B cell (primary cell): ENCODE measurements at regions of chr1 and their contacts with region 1.

Region 1: DNA sequence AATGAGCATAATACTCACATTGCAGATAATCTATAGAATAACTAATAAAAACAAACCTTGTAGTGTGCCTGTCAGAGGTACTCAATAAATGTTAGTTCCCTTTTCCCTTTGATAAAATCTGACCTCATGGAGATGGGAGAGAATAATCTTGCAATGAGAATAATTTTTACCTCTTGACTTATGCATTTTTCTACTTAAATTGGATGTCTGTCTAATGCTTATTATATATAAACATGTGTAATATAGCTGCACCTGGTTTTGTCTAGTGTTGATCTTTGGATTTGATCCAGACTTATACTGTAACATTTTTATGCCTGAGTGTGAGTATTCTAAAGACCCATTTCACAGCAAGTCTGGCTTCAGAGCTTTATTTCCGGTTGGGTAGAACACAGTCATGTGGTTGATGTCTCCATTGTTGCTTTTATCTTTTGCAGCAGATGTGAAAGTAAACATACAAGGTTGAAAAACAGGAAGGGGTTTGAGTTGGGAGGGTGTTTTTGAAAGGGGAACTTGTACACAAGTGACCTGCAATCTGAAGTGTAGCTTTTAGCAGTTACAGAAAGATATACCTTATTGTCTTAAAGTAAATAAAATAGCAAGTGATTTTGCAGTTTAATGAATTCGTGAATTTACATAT is 12.4 kb downstream of the EPB41 start:
- DNase-seq: peak; percentile 87
- ATAC-seq: peak; percentile 84
- H3K4me3 ChIP-seq: peak overlapping the region in 4 of 5 experiments; percentile 19 to 60 (median 48)
- H3K4me3 Mint-ChIP-seq: peak overlapping the region; percentile 75
- H3K27ac ChIP-seq: peak overlapping the region; percentile 83 to 94
- H3K27ac Mint-ChIP-seq: peak overlapping the region; percentile 83
- H3K4me1 ChIP-seq: peaks cover 62 to 70% of the 10 kb centered on the region in 2 donors
- H3K4me1 Mint-ChIP-seq: peaks cover 60% of the 10 kb centered on the region
- H3K27me3 ChIP-seq: no peaks in the 10 kb centered on the region
- H3K27me3 Mint-ChIP-seq: no peaks in the 10 kb centered on the region
- CTCF ChIP-seq: no peak

Region 2: DNA sequence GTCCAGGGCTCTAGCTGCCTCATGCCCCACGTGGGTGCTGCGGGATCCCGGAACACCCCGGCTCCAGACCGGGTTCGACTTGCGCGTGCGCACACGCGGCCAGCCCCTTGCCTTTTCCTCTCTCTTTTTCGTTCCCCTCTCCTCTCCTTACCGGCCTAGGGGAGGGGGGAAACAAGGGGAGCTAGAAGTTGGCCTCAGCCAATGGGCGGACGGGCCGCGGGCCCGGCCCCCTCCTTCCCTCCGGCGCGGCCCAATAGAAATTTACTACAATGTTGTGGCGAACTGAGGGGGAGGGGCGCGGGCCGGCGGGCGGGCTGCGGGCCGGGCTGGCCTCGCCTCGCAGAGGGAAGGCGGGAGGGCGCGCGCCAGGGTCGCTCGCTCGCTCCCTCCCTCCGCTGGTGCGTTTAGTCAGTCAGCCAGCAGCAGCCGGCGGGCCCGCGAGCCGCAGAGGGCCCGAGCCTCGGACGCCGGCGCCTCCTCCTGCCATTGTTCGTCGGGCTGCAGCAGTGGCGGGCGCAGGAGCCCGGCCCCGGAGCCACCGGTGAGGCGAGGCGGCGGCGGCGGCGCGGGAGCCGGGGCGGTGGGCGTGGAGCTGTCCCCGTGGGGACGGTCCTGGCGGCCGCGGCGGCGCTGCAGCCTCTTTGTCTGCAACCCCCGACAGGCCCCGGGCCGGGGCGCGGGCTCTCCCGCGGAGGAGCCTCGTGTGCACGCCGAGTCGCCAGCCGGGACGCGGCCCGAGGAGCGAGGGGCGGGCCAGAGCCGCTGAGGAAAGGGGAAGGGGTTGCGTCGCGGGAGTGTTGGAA is 12.3 kb before region 1 on chr1 and contains the start of gene EPB41:
- CTCF ChIA-PET with region 1: interaction called, 8 read pairs
- POLR2A ChIA-PET with region 1: interaction called, 14 read pairs
- intact Hi-C with region 1: loop called (anchors 1 kb)
- DNase-seq: peak; percentile 93
- ATAC-seq: peak; percentile 92
- H3K4me3 ChIP-seq: peak within 1 kb of the TSS; percentile 58 to 87 (median 80)
- H3K4me3 Mint-ChIP-seq: peak within 1 kb of the TSS; percentile 99
- H3K27ac ChIP-seq: peak within 1 kb of the TSS; percentile 37 to 74
- H3K27ac Mint-ChIP-seq: peak within 1 kb of the TSS; percentile 94
- H3K4me1 ChIP-seq: peaks cover 19 to 27% of the 10 kb centered on the region in 2 donors
- H3K4me1 Mint-ChIP-seq: peaks cover 45% of the 10 kb centered on the region
- H3K27me3 ChIP-seq: no peaks in the 10 kb centered on the region
- H3K27me3 Mint-ChIP-seq: no peaks in the 10 kb centered on the region
- CTCF ChIP-seq: no peak
- total RNA-seq, gene EPB41: 186 and 203 TPM in 2 replicates

Region 3: GRCh38 chr1:28956038-28956464 is 29.3 kb after region 1 on chr1:
- CTCF ChIA-PET with region 1: no interaction called
- POLR2A ChIA-PET with region 1: no interaction called
- intact Hi-C with region 1: loop called (anchors 5 kb)
- DNase-seq: no peak
- ATAC-seq: no peak
- H3K4me3 ChIP-seq: no peak overlapping the region
- H3K4me3 Mint-ChIP-seq: no peak overlapping the region
- H3K27ac ChIP-seq: no peak overlapping the region
- H3K27ac Mint-ChIP-seq: no peak overlapping the region
- H3K4me1 ChIP-seq: no peaks in the 10 kb centered on the region
- H3K4me1 Mint-ChIP-seq: peaks cover 29% of the 10 kb centered on the region
- H3K27me3 ChIP-seq: no peaks in the 10 kb centered on the region
- H3K27me3 Mint-ChIP-seq: no peaks in the 10 kb centered on the region
- CTCF ChIP-seq: no peak

Region 4: DNA sequence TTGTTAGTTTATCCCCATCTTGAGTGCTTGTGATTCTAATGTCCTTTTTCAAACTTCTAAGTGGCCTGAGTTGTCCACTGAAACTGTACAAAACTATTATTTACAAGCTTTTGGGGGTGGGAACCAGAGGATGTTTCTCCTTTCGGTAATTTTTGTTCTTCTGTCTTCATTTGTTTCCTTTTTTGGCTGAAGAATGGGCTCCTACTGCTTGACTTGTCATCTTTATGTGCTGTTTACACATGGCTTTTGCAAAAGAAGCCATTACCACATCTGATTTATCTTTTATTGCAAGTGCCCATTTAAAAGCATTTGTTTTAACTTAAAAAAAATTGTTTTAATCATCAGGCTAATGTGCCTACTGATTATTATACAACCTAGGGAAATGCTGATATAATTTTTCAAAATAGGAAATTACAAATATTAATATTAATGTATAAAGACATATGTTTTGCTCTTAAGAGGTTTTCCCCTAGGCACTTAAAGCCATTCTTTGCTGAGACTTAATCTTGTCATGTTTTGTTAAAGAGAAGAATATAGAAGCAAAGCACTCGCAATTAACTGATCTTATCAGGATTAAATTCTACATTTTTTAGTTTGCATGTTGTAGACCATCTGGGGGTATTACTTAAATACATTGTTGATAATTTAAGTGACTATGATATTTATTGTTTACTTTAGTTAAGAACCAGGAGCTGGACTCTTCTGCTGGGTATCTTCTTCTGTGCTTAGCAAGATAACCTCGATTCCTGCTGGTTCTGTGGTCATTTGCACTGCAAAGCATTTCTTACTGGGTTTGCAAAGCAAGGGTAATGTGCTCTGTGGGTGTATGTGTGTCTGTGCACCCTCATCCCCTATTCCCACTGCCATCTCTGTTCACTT is 156.8 kb after region 1 on chr1:
- CTCF ChIA-PET with region 1: no interaction called
- POLR2A ChIA-PET with region 1: no interaction called
- intact Hi-C with region 1: no loop called
- DNase-seq: no peak
- ATAC-seq: no peak
- H3K4me3 ChIP-seq: no peak overlapping the region
- H3K4me3 Mint-ChIP-seq: no peak overlapping the region
- H3K27ac ChIP-seq: peak overlapping the region in 1 of 2 donors; percentile 12
- H3K27ac Mint-ChIP-seq: no peak overlapping the region
- H3K4me1 ChIP-seq: no peaks in the 10 kb centered on the region
- H3K4me1 Mint-ChIP-seq: no peaks in the 10 kb centered on the region
- H3K27me3 ChIP-seq: no peaks in the 10 kb centered on the region
- H3K27me3 Mint-ChIP-seq: no peaks in the 10 kb centered on the region
- CTCF ChIP-seq: no peak